ENCODE measurements at regions of chr7 and their contacts with region 1.

Region 1: DNA sequence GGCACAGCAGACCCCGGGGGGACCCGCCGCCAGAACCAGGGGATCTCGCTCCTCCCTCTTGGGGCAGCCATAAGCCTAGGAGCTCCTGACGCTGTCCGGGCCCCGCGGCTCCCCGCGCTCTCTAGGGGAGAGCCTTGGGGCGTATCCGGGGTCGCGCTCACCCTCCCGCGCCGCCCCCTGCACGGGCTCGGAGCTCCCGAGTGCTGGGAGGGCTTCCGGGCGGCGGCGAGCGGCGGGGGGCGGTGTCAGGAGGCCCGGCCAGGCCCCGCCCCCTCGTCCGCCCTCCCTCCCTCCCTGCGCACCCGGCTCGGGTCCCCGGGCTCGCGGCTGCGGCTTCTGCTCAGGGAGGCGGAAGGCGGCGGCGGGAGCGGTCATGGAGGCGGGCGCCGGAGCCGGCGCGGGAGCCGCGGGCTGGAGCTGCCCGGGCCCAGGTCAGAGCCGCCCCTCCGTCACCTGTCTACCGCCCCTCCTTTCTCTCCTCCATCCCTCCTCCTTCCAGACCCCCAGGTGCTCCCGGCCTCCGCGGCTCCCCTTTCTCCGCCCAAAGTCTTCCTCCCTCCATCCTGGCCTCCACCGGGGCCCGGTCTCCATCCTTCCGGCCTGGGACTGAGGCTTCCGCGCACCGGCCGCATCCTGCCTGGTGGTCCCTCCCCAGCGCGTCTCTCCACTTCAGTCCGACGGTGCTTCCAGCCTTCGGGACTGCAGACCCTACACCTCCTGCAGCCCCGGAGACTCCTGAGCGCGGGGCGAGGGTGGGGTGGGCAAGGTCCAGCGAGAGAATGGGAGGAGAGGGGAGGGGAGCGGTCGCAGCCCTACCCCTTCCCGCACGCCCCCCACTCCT is 427 bp upstream of the CCDC136 start:
- DNase-seq: peak; percentile 17 to 86
- H3K4me3 ChIP-seq: peak overlapping the region; percentile 74 to 89
- H3K27ac ChIP-seq: peak overlapping the region; percentile 55 to 78
- H3K4me1 ChIP-seq: peaks cover 7 to 12% of the 10 kb centered on the region in 2 donors
- H3K27me3 ChIP-seq: no peaks in the 10 kb centered on the region
- CTCF ChIP-seq: no peak

Region 2: DNA sequence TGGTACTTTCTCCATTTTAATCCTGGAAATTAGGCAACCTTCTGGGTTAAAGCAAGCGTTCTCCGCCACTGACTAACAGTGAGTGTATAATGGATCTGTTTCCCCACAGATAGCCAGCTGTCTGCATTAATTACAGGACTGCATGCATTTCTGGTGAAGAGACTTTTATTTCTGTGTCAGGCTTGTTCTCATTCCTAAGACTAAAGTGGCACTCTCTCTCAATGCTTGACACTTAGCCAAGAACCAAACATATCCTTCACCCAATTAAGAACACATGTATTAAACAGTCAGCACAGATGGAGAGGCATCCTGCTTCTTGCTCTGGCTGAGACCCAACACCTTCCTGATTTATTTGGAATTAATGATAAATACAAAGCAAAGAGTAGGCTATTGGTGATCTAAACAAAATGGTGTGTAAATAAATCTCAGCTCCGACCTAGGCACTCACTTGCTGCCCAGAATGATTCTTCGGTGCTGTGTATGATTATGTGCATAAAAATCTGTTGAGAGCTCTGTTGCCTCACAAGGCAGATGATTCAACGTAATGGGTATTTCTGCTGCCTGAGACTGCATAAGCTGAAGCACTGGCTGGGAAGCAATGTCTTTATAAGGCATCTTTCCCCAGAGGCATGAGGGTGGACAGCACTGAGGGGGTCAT is 35.4 kb before region 1 on chr7:
- intact Hi-C with region 1: loop called (anchors 5 kb)
- DNase-seq: peak in 1 of 2 donors; percentile 77
- H3K4me3 ChIP-seq: no peak overlapping the region
- H3K27ac ChIP-seq: peak overlapping the region; percentile 39 to 64
- H3K4me1 ChIP-seq: peaks cover 6 to 15% of the 10 kb centered on the region in 2 donors
- H3K27me3 ChIP-seq: no peaks in the 10 kb centered on the region
- CTCF ChIP-seq: no peak

Region 3: DNA sequence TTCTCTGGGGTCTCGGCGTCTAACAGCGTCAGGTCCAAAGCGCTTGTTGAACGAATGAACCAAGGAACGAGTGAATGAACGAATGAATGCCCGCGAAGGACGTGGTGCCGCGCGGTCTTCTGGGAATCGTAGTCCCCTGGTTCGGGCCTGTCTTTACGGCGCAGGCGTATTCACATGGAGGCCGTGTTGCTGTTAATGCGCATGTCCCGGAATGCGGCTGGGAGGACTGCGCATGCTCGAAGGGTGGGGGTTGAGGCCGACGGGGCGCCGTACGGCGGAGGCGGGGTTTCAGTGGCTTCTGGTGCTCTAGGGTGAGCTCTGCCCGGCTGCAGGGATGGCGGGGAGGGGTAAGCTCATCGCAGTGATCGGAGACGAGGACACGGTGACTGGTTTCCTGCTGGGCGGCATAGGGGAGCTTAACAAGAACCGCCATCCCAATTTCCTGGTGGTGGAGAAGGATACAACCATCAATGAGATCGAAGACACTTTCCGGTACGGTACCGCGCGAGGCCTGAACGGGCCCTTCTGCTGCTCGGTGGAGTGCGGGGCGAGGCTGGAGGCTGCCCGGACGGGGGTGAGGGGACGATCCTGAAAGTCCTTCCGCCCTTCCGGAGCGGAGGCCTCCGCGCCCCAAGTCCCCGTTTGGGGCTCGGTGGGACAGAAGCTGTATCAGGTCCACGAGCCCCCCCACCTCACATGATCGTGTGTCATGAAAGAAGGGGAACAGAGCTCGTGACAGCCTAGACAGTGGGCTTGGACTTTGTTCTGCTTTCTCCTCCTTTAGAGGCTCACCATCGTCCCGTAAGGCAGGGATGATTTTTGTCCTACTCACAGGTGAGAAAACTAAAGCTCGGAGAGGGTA is 71.5 kb after region 1 on chr7 and contains the start of gene ATP6V1F:
- intact Hi-C with region 1: loop called (anchors 5 kb)
- DNase-seq: peak; percentile 94 to 99
- H3K4me3 ChIP-seq: peak within 1 kb of the TSS; percentile 73 to 79
- H3K27ac ChIP-seq: peak within 1 kb of the TSS; percentile 60 to 63
- H3K4me1 ChIP-seq: peaks cover 12 to 38% of the 10 kb centered on the region in 2 donors
- H3K27me3 ChIP-seq: no peaks in the 10 kb centered on the region
- CTCF ChIP-seq: no peak
- total RNA-seq, gene ATP6V1F: 142 TPM

Region 4: GRCh38 chr7:130010689-130011412 is 1219.5 kb after region 1 on chr7:
- intact Hi-C with region 1: no loop called
- DNase-seq: peak; percentile 43 to 92
- H3K4me3 ChIP-seq: no peak overlapping the region
- H3K27ac ChIP-seq: peak overlapping the region; percentile 75 to 78
- H3K4me1 ChIP-seq: peaks cover 10 to 13% of the 10 kb centered on the region in 2 donors
- H3K27me3 ChIP-seq: no peaks in the 10 kb centered on the region
- CTCF ChIP-seq: peak; percentile 84 to 90 (median 90)

Measured in ascending aorta (tissue), 2 donors.